ENCODE measurements at regions of chr1 and their contacts with region 1.

Region 1: DNA sequence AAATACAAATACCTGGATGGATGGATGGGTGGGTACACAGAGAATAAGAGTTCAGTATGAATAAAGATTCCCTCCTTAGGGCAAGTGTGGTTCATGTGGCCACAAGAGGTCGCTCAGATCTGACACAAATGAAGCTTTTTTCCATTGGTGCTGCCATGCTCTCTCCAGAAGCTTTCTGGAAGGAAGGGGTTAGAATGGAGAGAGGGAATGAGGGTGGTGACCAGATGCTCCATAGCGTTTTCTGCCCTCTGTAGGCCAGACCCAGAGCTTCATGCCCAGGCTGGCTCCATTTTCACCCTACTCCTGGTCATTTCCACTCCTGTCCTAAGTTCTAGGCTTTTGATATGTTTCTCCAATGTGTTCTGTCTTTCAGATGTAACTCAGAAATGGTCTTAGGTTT is 3.3 kb upstream of the FCRL6 start:
- DNase-seq: peak; percentile 66
- ATAC-seq: peak; percentile 60
- H3K4me3 Mint-ChIP-seq: no peak overlapping the region
- H3K27ac Mint-ChIP-seq: no peak overlapping the region
- H3K4me1 Mint-ChIP-seq: peaks cover 25% of the 10 kb centered on the region
- H3K27me3 Mint-ChIP-seq: peaks cover 42% of the 10 kb centered on the region

Region 2: DNA sequence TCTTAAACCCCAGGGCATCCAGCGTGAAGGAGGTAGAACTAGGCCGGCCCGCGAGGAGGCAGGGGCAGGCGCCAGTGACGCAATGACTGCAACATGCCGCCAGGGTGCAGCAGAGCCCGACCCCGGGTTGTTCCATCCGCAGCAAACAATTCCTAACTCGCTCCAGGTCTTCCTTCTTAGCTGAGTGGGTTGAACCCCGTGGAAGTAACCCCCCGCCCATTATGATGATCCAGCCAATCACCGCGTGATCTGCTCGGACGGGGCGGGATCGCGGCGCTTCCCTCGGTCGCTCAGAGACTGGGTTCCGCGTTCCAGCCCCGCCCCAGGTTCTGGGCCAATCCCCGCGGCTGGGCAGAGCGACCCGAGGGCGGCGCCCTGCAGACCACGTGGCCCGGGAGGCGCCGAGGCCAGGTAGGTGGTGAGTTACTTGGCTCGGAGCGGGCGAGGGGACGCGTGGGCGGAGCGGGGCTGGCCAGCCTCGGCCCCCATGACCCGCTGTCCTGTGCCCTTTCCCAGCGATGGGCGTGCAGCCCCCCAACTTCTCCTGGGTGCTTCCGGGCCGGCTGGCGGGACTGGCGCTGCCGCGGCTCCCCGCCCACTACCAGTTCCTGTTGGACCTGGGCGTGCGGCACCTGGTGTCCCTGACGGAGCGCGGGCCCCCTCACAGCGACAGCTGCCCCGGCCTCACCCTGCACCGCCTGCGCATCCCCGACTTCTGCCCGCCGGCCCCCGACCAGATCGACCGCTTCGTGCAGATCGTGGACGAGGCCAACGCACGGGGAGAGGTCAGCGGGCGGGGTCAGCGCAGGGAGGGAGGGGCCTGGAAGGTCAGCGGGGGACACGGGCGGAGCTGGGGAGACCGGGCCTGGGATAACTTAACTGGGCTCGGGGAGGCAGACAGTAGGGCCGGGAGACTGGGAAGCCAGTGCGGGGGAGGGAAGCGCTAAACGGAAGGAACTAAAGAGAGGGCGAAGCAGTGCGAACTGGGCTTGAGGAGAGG is 18.0 kb before region 1 on chr1 and contains the start of gene DUSP23:
- CTCF ChIA-PET with region 1: interaction called, 30 read pairs
- POLR2A ChIA-PET with region 1: no interaction called
- DNase-seq: peak; percentile 97
- ATAC-seq: peak; percentile 99
- H3K4me3 Mint-ChIP-seq: peak within 1 kb of the TSS; percentile 75
- H3K27ac Mint-ChIP-seq: peak within 1 kb of the TSS; percentile 56
- H3K4me1 Mint-ChIP-seq: peaks cover 35% of the 10 kb centered on the region
- H3K27me3 Mint-ChIP-seq: peaks cover 17% of the 10 kb centered on the region
- total RNA-seq, gene DUSP23: 21.9 to 26.5 TPM

Region 3: GRCh38 chr1:159817276-159818041 is 18.6 kb after region 1 on chr1:
- CTCF ChIA-PET with region 1: interaction called, 15 read pairs
- POLR2A ChIA-PET with region 1: no interaction called
- DNase-seq: no peak
- ATAC-seq: no peak
- H3K4me3 Mint-ChIP-seq: no peak overlapping the region
- H3K27ac Mint-ChIP-seq: no peak overlapping the region
- H3K4me1 Mint-ChIP-seq: peaks cover 5% of the 10 kb centered on the region
- H3K27me3 Mint-ChIP-seq: peaks cover 48% of the 10 kb centered on the region

Region 4: GRCh38 chr1:159829273-159829634 is 30.4 kb after region 1 on chr1:
- CTCF ChIA-PET with region 1: interaction called, 64 read pairs
- POLR2A ChIA-PET with region 1: interaction called, 3 read pairs
- DNase-seq: no peak
- ATAC-seq: no peak
- H3K4me3 Mint-ChIP-seq: no peak overlapping the region
- H3K27ac Mint-ChIP-seq: no peak overlapping the region
- H3K4me1 Mint-ChIP-seq: peaks cover 50% of the 10 kb centered on the region
- H3K27me3 Mint-ChIP-seq: peaks cover 40% of the 10 kb centered on the region

Region 5: DNA sequence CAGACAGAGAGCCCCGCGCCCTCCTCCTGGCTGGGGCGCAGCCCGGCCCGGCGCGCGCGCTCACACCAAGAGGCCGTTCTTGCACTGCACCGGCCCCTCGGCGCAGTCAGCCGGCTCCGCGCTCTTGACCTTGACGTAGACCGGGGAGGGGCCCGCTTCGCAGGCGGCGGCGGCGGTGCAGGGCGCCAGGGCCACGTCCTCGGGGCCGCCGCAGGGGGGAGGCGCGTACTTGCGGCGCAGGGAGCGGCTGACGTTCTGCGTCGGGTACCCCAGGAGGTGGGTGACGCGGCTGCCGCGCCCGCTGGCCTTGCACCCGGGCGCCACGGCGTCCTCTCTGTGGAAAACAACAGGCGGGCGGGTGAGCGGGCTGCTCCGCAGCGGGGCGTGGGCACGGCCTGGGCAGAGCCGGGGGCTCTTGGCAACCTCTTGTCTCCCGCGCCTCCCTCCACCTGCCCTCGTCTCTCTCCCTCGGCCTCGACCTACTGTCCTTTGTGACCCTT is 55.9 kb after region 1 on chr1:
- CTCF ChIA-PET with region 1: interaction called, 15 read pairs
- POLR2A ChIA-PET with region 1: no interaction called
- DNase-seq: peak; percentile 79
- ATAC-seq: peak; percentile 94
- H3K4me3 Mint-ChIP-seq: peak overlapping the region; percentile 74
- H3K27ac Mint-ChIP-seq: peak overlapping the region; percentile 78
- H3K4me1 Mint-ChIP-seq: peaks cover 21% of the 10 kb centered on the region
- H3K27me3 Mint-ChIP-seq: peaks cover 13% of the 10 kb centered on the region

Region 6: GRCh38 chr1:159861218-159861617 is 62.3 kb after region 1 on chr1:
- CTCF ChIA-PET with region 1: interaction called, 10 read pairs
- POLR2A ChIA-PET with region 1: no interaction called
- DNase-seq: no peak
- ATAC-seq: no peak
- H3K4me3 Mint-ChIP-seq: no peak overlapping the region
- H3K27ac Mint-ChIP-seq: no peak overlapping the region
- H3K4me1 Mint-ChIP-seq: peaks cover 5% of the 10 kb centered on the region
- H3K27me3 Mint-ChIP-seq: peaks cover 15% of the 10 kb centered on the region

Region 7: DNA sequence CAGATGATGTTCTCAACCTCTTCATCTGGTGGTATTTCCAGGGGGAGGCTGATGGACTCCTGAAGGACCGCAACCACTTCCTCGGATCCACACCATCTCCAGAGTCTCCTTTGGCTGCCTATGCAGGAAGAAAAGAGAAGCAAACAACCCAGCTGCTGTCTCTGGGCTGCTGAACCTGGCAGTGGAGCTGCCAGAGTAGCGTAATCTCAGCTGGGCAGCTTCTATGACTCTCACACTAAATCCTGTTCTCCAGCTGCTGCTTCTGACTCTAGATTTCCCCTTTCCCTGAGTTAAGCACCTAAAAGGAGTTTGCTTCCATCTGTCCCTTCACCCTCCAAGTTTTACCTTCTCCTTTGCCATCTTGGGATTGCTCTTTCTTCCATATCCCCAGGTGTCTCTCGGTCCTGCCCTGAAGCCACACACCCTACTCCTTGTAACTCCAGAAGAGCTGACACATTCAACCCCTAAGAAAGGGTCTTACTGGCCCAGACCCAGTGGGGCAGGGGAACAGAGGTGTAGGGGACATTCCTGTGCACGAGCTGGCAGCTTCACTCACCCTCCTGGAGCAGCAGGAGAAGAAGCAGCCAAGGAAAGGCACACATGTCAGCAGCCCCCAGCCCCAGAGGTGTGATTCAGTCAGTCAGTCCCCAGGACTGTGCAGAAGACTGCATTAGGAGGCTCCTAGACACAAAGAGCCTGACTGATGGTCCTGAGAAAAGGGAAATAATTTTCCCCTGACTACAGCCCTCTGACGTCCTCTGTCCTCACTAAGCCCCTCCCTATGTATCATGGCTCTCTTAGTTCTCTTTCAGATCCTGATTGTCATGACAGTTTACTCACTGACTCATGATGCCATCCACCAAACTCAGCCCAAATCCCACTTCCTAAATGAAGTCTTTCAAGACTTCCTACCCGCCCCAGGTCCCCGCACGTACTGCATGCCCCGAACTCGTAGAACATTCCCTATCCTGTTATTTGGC is 154.9 kb after region 1 on chr1 and contains the start of gene SLAMF9:
- CTCF ChIA-PET with region 1: no interaction called
- POLR2A ChIA-PET with region 1: no interaction called
- DNase-seq: no peak
- ATAC-seq: no peak
- H3K4me3 Mint-ChIP-seq: no peak within 1 kb of the TSS
- H3K27ac Mint-ChIP-seq: no peak within 1 kb of the TSS
- H3K4me1 Mint-ChIP-seq: peaks cover 5% of the 10 kb centered on the region
- H3K27me3 Mint-ChIP-seq: peaks cover 48% of the 10 kb centered on the region
- total RNA-seq, gene SLAMF9: not detected

Region 8: DNA sequence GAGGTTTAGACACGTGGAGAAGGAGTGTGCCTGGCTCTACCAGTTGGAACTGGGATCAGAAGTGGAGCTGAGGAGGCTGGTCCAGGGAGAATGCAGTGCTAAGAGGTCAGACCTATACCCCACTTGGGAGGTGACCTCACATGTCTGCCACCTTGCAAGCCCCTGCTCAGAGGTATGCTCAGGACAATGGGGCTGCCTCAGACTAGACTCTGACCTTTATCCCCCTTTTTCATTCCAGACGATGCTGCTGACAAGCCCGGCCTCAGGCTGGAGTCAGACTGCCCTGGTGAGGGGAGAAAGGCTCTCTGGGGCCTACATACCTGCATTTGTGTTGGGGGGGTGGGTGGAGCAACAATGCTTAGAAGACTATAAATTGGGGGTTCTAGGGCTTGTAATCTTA is 265.9 kb after region 1 on chr1:
- CTCF ChIA-PET with region 1: no interaction called
- POLR2A ChIA-PET with region 1: no interaction called
- DNase-seq: no peak
- ATAC-seq: no peak
- H3K4me3 Mint-ChIP-seq: no peak overlapping the region
- H3K27ac Mint-ChIP-seq: no peak overlapping the region
- H3K4me1 Mint-ChIP-seq: peaks cover 3% of the 10 kb centered on the region
- H3K27me3 Mint-ChIP-seq: peaks cover 37% of the 10 kb centered on the region

Measured in activated CD8-positive, alpha-beta T cell treated with anti-CD3 and anti-CD28 coated beads, Interleukin-2, amount 10 ng/mL, durations not matched to agents 7 days and 5 days (primary cell).